Uterus (tissue), 4 donors: ENCODE measurements at regions of chr7 and their contacts with region 1.

Region 1: DNA sequence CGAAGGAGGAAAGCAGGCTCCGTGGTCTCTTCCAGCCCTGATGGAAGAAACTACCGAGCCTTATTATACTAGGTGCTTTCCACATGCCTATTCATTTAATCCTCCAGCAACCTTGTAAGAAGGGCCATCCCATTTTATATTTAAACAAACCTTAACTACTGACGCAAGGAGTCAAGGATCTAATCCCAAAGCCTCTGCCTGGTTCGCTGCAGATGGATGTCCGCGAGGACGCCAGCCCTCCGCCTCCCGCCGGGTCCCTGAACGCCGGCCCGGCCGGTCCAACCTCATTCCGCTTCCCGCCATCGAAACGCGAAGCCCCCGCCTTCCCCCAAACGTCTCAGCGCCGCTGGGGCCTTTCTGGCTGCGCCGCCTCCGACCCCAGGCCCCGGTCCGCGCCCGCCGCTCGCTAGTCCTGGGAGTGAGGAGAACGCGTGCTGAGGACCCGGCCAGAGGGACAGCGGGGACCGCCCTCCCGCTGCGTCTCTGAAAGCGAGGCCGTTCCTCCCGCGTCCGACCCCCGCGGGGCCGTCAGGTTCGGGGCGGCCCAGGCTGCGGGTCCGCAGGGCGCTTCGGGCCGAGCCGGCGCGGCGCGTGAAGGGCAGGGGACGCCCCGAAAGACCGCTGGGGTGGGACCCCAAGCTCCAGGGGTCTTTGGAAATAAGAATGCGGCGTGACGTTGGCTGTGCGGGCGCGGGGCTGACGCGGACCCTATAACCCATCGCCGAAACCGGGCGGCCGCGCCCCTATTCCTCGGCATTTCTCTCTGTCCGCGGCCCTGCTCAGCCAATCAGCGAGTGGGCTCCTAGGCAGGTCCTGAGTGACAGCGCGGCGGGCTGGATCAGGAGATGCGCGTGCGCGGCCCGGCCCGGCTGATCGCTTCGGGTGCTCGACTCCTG is at the start of gene ATP6V0E2:
- DNase-seq: peak; percentile 91 to 93
- H3K4me3 ChIP-seq: peak within 1 kb of the TSS; percentile 59 to 68
- H3K27ac ChIP-seq: peak within 1 kb of the TSS; percentile 80 to 90
- H3K4me1 ChIP-seq: peaks cover 0 to 4% of the 10 kb centered on the region in 2 donors
- H3K27me3 ChIP-seq: no peaks in the 10 kb centered on the region
- CTCF ChIP-seq: peak in 1 of 4 experiments; percentile 19
- POLR2A ChIP-seq: peak; percentile 49 to 66
- total RNA-seq, gene ATP6V0E2: 2.6 to 22.5 (median 10.1) TPM

Region 2: DNA sequence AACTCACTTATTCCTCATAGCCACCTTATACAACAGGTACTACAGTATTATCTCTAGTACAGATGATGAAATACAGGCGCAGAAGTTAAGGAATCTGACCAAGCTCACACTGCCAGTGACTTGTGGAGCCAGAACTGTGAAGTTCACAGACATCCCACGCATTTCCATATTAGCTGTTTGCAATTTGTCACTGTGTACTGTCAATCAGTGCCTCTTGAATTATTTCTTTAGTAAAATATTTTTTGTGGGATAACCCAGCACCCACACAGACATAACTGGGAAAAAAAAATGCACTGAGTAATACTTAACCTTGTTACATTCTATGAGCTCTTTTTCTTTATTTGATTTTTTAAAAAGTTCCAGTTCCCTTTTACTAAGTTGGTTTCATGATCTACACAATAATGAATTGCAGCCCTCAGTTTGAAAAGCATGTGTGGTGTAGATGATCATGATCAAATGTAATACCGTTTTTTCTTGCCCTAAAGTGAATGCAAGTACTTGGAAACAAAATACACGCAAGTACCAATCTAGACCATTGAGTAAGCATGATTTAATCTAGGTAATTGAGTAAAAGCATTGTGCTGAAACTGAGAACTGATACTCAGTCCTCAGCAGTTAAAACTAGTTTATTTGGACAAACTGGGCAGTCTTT is 1160.5 kb before region 1 on chr7:
- intact Hi-C with region 1: no loop called
- DNase-seq: no peak
- H3K4me3 ChIP-seq: no peak overlapping the region
- H3K27ac ChIP-seq: no peak overlapping the region
- H3K4me1 ChIP-seq: peaks cover 6% of the 10 kb centered on the region in 2 donors
- H3K27me3 ChIP-seq: no peaks in the 10 kb centered on the region
- CTCF ChIP-seq: no peak
- POLR2A ChIP-seq: no peak

Region 3: GRCh38 chr7:149799397-149800171 is 73.7 kb before region 1 on chr7:
- intact Hi-C with region 1: no loop called
- DNase-seq: no peak
- H3K4me3 ChIP-seq: no peak overlapping the region
- H3K27ac ChIP-seq: no peak overlapping the region
- H3K4me1 ChIP-seq: no peaks in the 10 kb centered on the region
- H3K27me3 ChIP-seq: no peaks in the 10 kb centered on the region
- CTCF ChIP-seq: peak in 2 of 4 experiments; percentile 17 to 23
- POLR2A ChIP-seq: no peak

Region 4: DNA sequence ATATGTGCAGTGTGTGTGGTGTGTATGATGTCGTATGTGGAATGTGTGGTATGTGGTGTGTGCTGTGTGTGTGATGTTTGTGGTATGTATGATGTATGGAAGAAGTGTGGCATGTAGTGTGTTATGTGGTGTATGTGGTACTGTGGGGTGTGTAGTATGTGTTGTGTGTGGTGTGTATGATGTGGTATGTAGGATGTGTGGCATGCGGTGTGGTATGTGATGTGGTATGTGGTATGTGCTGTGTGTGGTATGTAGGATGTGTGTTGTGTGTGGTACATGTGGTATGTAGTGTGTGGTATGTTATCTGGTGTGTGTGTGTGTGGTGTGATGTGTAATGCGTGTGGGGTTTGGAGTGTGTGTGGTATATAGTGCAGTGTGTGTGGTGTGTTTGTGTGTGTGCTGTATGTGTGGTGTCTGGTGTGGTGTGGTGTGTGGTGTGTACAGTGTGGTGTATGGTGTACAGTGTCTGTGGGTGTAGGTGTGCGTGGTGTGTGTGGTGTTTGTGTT is 130.0 kb after region 1 on chr7:
- intact Hi-C with region 1: no loop called
- DNase-seq: no peak
- H3K4me3 ChIP-seq: no peak overlapping the region
- H3K27ac ChIP-seq: no peak overlapping the region
- H3K4me1 ChIP-seq: no peaks in the 10 kb centered on the region
- H3K27me3 ChIP-seq: no peaks in the 10 kb centered on the region
- CTCF ChIP-seq: no peak
- POLR2A ChIP-seq: no peak

Region 5: GRCh38 chr7:151226875-151227782 is 1353.8 kb after region 1 on chr7 and contains the start of gene ABCF2:
- intact Hi-C with region 1: loop called (anchors 10 kb)
- DNase-seq: peak; percentile 99
- H3K4me3 ChIP-seq: peak within 1 kb of the TSS; percentile 81 to 86
- H3K27ac ChIP-seq: peak within 1 kb of the TSS; percentile 69 to 82
- H3K4me1 ChIP-seq: peaks cover 12% of the 10 kb centered on the region in 2 donors
- H3K27me3 ChIP-seq: no peaks in the 10 kb centered on the region
- CTCF ChIP-seq: peak in 1 of 4 experiments; percentile 45
- POLR2A ChIP-seq: peak; percentile 24 to 68
- total RNA-seq, gene ABCF2: 6.8 to 39.2 (median 37.7) TPM